ENCODE measurements at regions of chr1 and their contacts with region 1.

Region 1: GRCh38 chr1:62746085-62746808 is 37.7 kb upstream of the ATG4C start:
- DNase-seq: peak; percentile 69
- ATAC-seq: peak; percentile 67
- H3K4me3 ChIP-seq: peak overlapping the region; percentile 14; the same call in 1 of the 2 replicates
- H3K27ac ChIP-seq: no peak overlapping the region
- H3K4me1 ChIP-seq: no peaks in the 10 kb centered on the region
- H3K27me3 ChIP-seq: no peaks in the 10 kb centered on the region
- CTCF ChIP-seq: peak; percentile 83

Region 2: DNA sequence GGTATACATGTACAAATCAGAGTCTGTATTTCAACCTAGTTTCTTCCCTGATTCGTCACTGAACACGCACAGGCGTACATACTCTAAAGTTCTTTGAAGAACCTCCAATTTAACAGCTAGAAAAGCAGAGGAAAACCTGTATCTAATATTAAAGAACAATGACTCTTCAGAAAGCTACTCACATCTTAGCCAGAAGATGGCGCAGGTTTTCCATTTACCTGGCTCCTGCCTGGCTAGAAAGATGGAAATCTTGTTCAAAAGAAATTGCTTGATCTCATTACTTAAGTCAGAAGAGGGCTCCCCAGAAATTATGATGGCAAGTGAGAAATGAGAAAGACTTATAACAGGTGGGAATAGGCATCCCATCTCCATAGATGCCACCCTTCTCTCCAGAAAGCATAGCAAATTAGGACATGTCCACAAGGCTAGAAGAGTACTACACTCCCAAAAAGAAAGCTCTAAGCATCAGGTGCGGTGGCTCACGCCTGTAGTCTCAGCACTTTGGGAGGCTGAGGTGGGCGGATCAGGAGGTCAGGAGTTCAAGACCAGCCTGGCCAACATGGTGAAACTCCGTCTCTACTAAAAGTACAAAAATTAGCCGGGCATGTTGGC is 570.6 kb before region 1 on chr1:
- CTCF ChIA-PET with region 1: no interaction called
- POLR2A ChIA-PET with region 1: no interaction called
- intact Hi-C with region 1: loop called (anchors 2 kb)
- DNase-seq: peak; percentile 77
- ATAC-seq: peak; percentile 64
- H3K4me3 ChIP-seq: no peak overlapping the region
- H3K27ac ChIP-seq: no peak overlapping the region
- H3K4me1 ChIP-seq: peaks cover 7% of the 10 kb centered on the region; the same call in 1 of the 2 replicates
- H3K27me3 ChIP-seq: no peaks in the 10 kb centered on the region
- CTCF ChIP-seq: peak; percentile 88

Region 3: GRCh38 chr1:62436466-62437256 is 309.6 kb before region 1 on chr1 and contains the start of gene USP1:
- CTCF ChIA-PET with region 1: no interaction called
- POLR2A ChIA-PET with region 1: no interaction called
- intact Hi-C with region 1: loop called (anchors 5 kb)
- DNase-seq: peak; percentile 99
- ATAC-seq: peak; percentile 86
- H3K4me3 ChIP-seq: peak within 1 kb of the TSS; percentile 79
- H3K27ac ChIP-seq: peak within 1 kb of the TSS; percentile 99
- H3K4me1 ChIP-seq: peaks cover 14% of the 10 kb centered on the region
- H3K27me3 ChIP-seq: no peaks in the 10 kb centered on the region
- CTCF ChIP-seq: no peak
- total RNA-seq, gene USP1: 42.6 and 43.8 TPM in 2 replicates

Region 4: DNA sequence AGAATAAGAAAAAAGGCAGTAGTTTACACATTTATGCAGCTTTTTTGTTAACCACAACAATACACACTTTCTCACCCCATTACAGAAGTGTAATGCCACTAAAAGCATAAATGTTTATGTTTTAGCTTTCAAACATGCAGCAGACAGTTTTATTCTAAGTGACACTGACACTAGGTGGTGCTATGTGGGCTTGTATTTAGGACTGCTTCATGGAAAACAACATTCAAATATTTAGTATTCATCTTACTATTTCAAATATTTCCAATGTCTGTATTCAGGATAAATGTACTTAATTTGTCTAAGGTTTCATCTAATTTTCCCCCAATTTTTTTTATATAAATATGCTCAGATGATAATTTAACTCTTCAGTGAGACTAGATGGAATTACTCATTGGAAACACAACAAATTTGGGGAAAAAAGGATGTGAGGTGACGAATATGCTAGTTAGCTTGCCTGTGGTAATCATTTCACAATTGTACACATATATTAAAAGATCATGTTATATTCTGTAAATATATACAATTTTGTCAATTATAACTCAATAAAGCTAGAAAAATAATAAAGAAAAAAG is 238.0 kb before region 1 on chr1:
- CTCF ChIA-PET with region 1: no interaction called
- POLR2A ChIA-PET with region 1: no interaction called
- intact Hi-C with region 1: loop called (anchors 1 kb)
- DNase-seq: peak; percentile 53
- ATAC-seq: peak; percentile 35; the same call in 1 of the 2 replicates
- H3K4me3 ChIP-seq: no peak overlapping the region
- H3K27ac ChIP-seq: no peak overlapping the region
- H3K4me1 ChIP-seq: no peaks in the 10 kb centered on the region
- H3K27me3 ChIP-seq: no peaks in the 10 kb centered on the region
- CTCF ChIP-seq: peak; percentile 79

Region 5: DNA sequence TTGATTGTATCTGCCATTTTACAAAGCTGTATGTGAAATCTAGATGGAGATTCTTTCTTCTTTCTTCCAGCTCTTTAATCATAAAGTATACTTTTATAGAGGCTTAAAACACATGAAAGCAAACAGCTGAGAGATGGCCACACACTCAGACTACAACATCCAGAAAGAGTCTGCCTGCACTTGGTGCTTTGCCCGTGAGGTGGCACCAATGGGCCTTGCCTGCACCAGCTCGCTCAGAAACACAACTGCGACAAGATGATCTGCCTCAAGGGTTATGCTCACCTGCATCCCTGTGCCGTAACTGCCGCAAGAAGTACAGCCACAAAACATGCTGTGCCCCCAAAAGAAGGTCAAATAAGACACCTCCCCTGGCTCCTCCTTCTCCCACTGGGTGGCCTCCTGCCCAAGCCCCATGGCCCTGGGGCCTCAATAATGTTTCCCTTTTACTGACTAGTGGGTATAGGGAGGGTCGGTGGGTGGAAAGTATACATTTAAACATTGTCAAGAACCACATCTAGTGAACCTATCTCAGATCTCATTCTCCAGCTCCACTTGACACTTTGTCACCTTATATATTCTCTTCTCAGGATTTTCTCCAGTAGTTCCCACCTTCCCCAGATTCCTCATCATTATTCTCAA is 215.6 kb before region 1 on chr1:
- CTCF ChIA-PET with region 1: interaction called, 8 read pairs
- POLR2A ChIA-PET with region 1: no interaction called
- intact Hi-C with region 1: loop called (anchors 1 kb)
- DNase-seq: peak; percentile 64
- ATAC-seq: peak; percentile 100
- H3K4me3 ChIP-seq: no peak overlapping the region
- H3K27ac ChIP-seq: no peak overlapping the region
- H3K4me1 ChIP-seq: no peaks in the 10 kb centered on the region
- H3K27me3 ChIP-seq: no peaks in the 10 kb centered on the region
- CTCF ChIP-seq: peak; percentile 85

Region 6: DNA sequence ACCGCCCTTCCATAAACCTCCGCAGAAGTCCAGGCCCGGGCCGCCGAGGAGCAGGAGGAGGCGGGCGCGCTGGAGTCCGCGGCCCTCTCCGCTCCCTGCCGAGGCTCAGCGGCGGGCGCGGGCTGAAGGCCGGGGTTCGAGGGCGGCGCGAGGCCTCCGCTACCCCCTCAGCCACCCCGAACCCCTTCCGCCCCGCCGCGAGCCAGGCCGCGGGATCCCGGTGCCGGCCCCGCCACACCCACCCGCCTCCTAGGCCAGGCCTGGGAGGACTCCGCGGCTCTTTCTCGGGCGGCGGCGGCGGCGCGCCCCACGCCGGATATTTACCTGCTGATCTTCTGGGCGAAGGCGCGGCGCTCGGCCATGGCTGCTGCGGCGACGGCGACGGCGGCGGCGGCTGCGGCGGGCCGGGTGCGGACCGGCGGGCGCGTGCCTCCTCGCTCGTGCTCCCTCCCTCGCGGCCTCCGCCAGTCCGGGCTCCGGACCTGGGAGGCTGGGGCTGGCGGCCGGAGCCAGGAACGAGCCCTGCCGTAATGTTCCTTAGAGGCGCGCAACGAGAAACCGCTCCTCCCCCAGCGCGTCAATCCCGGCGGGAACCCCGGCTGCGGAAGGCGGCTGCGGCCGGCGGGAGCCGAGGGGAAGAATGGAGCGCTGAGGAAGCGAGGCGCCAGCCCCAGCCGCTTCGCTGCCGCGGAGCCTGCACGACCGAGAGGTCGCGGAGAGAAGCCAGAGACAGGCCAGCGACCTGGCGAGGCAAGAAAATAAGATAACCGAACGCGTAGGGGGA is 58.2 kb before region 1 on chr1 and contains the start of gene DOCK7:
- CTCF ChIA-PET with region 1: no interaction called
- POLR2A ChIA-PET with region 1: no interaction called
- intact Hi-C with region 1: loop called (anchors 2 kb)
- DNase-seq: peak; percentile 74
- ATAC-seq: peak; percentile 80
- H3K4me3 ChIP-seq: peak within 1 kb of the TSS; percentile 85
- H3K27ac ChIP-seq: 0 out of 2 replicates have a peak within 1 kb of the TSS, but pooled peaks have one; percentile 12
- H3K4me1 ChIP-seq: peaks cover 34% of the 10 kb centered on the region
- H3K27me3 ChIP-seq: no peaks in the 10 kb centered on the region
- CTCF ChIP-seq: no peak
- total RNA-seq, gene DOCK7: 70.1 and 81.4 TPM in 2 replicates

Region 7: GRCh38 chr1:62841587-62842169 is 95.4 kb after region 1 on chr1:
- CTCF ChIA-PET with region 1: no interaction called
- POLR2A ChIA-PET with region 1: no interaction called
- intact Hi-C with region 1: no loop called
- DNase-seq: peak; percentile 72
- ATAC-seq: peak; percentile 77
- H3K4me3 ChIP-seq: no peak overlapping the region
- H3K27ac ChIP-seq: no peak overlapping the region
- H3K4me1 ChIP-seq: no peaks in the 10 kb centered on the region
- H3K27me3 ChIP-seq: no peaks in the 10 kb centered on the region
- CTCF ChIP-seq: peak; percentile 80

Region 8: GRCh38 chr1:62953633-62954032 is 207.4 kb after region 1 on chr1:
- CTCF ChIA-PET with region 1: no interaction called
- POLR2A ChIA-PET with region 1: no interaction called
- intact Hi-C with region 1: no loop called
- DNase-seq: no peak
- ATAC-seq: no peak
- H3K4me3 ChIP-seq: no peak overlapping the region
- H3K27ac ChIP-seq: no peak overlapping the region
- H3K4me1 ChIP-seq: no peaks in the 10 kb centered on the region
- H3K27me3 ChIP-seq: peaks cover 95% of the 10 kb centered on the region
- CTCF ChIP-seq: no peak